ENCODE measurements at regions of chr1 and their contacts with region 1.

Region 1: DNA sequence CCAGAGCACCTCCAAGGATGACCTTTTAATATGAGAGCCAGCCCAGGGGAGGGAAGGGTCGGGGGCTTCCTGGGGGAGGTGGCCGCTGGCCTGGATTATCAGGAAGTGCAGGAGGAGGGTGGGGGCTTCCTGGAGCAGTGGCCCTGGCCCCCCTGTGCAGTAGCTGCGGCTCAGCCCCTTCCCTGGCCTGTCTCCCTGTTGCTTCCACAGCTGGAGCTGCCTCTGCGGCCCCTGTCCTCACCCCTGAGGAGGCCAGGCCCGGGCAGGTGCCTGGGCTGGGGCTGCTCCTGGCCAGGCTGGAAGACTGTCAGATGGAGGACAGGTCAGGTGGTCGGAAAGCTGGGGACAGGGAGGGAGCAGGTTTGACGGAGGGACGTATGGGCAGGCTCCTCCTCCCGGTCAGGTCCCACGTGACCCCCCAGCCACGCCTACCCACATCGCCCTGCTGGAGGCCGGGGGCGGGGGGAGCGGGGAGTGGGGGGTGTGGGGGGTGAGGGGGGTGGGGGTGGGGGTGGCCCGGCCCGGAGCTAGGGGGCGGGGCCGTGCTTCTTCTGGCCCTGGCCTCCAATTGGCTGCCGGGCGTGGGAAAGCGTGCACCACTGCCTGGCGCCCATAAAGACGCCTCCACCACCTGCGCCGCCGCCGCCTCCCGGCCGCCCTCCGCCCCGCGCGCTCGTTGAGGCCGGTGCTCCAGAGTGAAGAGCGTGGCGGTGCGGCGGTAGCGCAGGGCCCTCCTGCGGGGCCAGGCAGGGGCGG is 10.2 kb upstream of the TNFRSF14 start:
- DNase-seq: peak; percentile 86 to 88
- ATAC-seq: peak; percentile 44 to 68 (median 58)
- H3K4me3 ChIP-seq: peak overlapping the region; percentile 66
- H3K27ac ChIP-seq: peak overlapping the region; percentile 83
- H3K4me1 ChIP-seq: peaks cover 15% of the 10 kb centered on the region
- H3K27me3 ChIP-seq: peaks cover 0 to 42% (median 13%) of the 10 kb centered on the region in 3 donors
- CTCF ChIP-seq: no peak

Region 2: DNA sequence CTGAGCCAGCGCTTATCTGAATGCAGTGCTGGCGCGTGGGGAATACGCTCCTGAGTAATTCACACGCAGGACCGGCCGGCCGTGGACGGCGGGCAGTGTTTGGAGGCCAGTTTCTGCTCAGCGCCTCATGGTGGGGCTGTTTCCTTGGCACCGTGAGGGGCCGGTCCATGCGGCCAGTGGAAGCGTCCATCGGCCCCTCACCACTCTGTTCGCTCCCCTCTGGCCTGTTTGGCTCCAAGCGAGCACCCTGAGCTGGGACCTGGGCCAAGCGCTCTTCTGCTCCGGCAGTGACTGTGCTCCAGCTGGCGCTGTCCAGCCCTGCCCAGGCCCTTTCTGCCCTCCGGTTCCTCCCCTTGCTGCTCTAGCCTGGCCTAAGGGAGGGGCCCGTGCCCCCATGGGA is 86.2 kb before region 1 on chr1:
- intact Hi-C with region 1: loop called in 1 of 2 experiments (anchors 5 kb)
- DNase-seq: peak in 1 of 2 donors; percentile 45
- ATAC-seq: peak; percentile 60 to 75 (median 64)
- H3K4me3 ChIP-seq: no peak overlapping the region
- H3K27ac ChIP-seq: no peak overlapping the region
- H3K4me1 ChIP-seq: no peaks in the 10 kb centered on the region
- H3K27me3 ChIP-seq: peaks cover 0 to 44% (median 13%) of the 10 kb centered on the region in 3 donors
- CTCF ChIP-seq: peak; percentile 33

Region 3: DNA sequence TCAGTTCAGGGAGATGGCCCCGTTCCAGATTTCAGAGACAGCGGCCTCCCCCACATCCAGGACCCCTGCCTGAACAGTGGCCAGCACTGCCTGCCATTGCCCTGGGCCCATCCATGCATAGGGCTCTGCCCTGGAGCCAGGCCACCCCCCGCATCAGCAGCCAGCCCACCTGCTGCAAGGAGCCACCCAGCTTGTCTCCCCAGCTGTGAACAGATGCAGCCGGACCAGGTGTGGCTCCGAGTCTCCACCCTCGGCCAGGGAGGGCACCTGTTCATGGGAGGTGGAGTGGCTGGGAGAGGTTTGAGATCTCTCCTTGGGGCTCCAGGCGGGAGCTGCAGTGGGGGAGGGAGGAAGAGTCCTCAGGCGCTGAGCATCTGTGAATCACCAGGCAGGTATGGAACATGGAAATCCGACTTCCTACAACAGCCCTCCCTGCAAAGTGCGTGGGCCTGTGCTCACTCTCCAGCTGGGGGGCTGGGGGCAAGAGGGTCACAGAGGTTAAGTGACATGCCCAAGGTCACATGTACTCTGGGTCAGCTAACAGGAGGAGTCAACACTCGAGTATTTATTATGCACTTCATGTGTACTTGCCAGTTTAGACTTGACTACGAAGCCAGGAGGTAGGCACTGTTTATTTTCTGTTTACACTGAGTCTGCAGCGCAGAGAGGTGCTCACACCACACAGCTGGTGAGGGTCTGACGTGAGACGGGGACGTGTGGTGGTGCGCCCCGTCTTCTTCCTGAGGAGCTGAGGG is 11.1 kb before region 1 on chr1:
- intact Hi-C with region 1: loop called in 1 of 2 experiments (anchors 1 kb)
- DNase-seq: no peak
- ATAC-seq: no peak
- H3K4me3 ChIP-seq: no peak overlapping the region
- H3K27ac ChIP-seq: no peak overlapping the region
- H3K4me1 ChIP-seq: peaks cover 30% of the 10 kb centered on the region
- H3K27me3 ChIP-seq: peaks cover 0 to 16% (median 8%) of the 10 kb centered on the region in 3 donors
- CTCF ChIP-seq: no peak

Region 4: DNA sequence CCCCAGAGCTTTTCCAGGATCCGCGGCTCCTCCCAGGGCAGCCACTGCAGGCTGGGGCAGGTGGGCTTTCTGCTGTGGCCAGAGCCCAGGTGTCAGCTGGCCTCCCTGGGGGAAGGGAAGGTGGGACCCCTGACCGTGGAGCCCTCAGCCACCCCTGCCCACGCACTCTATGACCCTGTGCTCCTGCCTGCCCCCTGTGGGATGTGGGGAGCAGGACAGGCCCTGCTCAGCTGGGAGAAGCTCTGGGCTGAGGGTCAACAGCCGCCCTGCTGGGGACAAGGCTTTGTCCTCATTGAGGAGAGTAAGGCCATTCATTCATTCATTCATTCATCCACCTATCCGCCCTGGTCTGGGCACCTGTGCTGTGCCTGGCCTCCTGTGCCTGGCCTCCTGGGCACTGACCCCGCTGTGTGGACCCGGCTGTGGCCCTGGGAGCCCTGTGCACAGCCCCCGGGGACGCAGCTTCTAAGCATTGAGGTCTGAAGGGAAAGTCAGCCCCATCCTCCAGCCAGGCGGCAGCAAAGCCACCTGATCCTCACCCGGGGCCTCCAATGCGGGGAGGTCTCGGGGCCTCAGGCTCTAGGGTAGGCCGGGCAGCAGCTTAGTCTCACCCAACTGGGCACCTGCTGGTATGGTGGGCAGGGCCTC is 16.1 kb after region 1 on chr1:
- intact Hi-C with region 1: no loop called
- DNase-seq: no peak
- ATAC-seq: no peak
- H3K4me3 ChIP-seq: no peak overlapping the region
- H3K27ac ChIP-seq: no peak overlapping the region
- H3K4me1 ChIP-seq: no peaks in the 10 kb centered on the region
- H3K27me3 ChIP-seq: peaks cover 0 to 6% (median 5%) of the 10 kb centered on the region in 3 donors
- CTCF ChIP-seq: no peak

Measured in psoas muscle (tissue), 8 donors.